Activated T-helper 2 cell treated with anti-CD3 and anti-CD28 coated beads, Interferon-gamma antibody, Interleukin-2, Interleukin-4, amounts not matched to agents 10 μg/mL and 5 μg/mL and 100 μg/mL, durations not matched to agents 14 hours and 24 hours and 36 hours (primary cell): ENCODE measurements at regions of chr2 and their contacts with region 1.

Region 1: GRCh38 chr2:175181104-175181876 is at the start of gene ATP5MC3:
- DNase-seq: peak; percentile 90
- H3K4me3 Mint-ChIP-seq: peak within 1 kb of the TSS; percentile 86
- H3K27ac Mint-ChIP-seq: peak within 1 kb of the TSS; percentile 98
- H3K4me1 Mint-ChIP-seq: peaks cover 21% of the 10 kb centered on the region
- H3K27me3 Mint-ChIP-seq: no peaks in the 10 kb centered on the region
- total RNA-seq, gene ATP5MC3: 417 and 424 TPM in 2 replicates

Region 2: DNA sequence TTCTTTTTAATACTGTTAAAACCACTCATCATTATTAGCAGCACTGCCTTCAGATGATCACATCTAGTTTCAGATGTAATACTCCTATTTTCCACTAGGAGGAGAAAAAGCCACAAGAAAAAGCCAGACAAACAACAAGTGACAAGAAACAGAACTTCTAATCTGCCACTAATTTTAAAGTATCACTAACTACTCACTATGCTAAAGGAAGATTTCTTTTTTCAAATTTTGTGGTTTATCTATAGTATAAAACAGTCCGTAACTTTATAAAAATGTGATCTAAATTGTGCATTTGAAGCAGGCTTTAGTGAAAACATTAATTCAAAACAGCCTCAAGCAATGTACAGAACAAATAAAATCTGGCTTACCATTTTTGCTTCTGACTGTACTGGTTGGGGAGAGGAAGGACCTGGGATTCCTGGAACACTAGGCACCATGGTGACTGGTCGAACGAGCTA is 70.1 kb before region 1 on chr2:
- intact Hi-C with region 1: loop called (anchors 5 kb)
- DNase-seq: no peak
- H3K4me3 Mint-ChIP-seq: no peak overlapping the region
- H3K27ac Mint-ChIP-seq: peak overlapping the region; percentile 72
- H3K4me1 Mint-ChIP-seq: peaks cover 10% of the 10 kb centered on the region
- H3K27me3 Mint-ChIP-seq: no peaks in the 10 kb centered on the region

Region 3: GRCh38 chr2:175154661-175155082 is 26.6 kb before region 1 on chr2:
- intact Hi-C with region 1: no loop called
- DNase-seq: no peak
- H3K4me3 Mint-ChIP-seq: peak overlapping the region; percentile 34
- H3K27ac Mint-ChIP-seq: peak overlapping the region; percentile 86
- H3K4me1 Mint-ChIP-seq: peaks cover 36% of the 10 kb centered on the region
- H3K27me3 Mint-ChIP-seq: no peaks in the 10 kb centered on the region

Region 4: DNA sequence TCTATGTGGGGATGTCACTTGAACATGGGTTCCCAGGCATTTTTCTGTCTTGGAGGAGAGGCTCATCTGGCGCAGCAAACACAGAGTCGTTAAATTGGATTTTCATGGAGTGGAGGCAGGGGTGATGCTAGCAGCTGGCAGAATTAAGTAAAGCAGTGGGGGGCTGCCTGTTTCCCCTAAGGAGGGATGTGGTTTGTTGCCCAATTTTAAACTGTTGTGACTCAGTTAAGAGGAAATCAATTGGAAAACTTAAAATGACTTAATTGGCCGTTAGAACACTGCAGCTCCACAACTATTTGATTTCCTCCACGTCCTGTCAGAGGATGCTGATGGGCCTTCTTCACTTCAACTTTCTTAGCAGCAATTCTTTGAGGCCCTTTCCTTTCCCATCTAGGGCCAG is 354.3 kb after region 1 on chr2:
- intact Hi-C with region 1: no loop called
- DNase-seq: no peak
- H3K4me3 Mint-ChIP-seq: no peak overlapping the region
- H3K27ac Mint-ChIP-seq: no peak overlapping the region
- H3K4me1 Mint-ChIP-seq: no peaks in the 10 kb centered on the region
- H3K27me3 Mint-ChIP-seq: no peaks in the 10 kb centered on the region

Region 5: GRCh38 chr2:175662335-175662734 is 481.0 kb after region 1 on chr2:
- intact Hi-C with region 1: no loop called
- DNase-seq: no peak
- H3K4me3 Mint-ChIP-seq: no peak overlapping the region
- H3K27ac Mint-ChIP-seq: no peak overlapping the region
- H3K4me1 Mint-ChIP-seq: no peaks in the 10 kb centered on the region
- H3K27me3 Mint-ChIP-seq: peaks cover 2% of the 10 kb centered on the region